ENCODE measurements at regions of chr17 and their contacts with region 1.

Region 1: DNA sequence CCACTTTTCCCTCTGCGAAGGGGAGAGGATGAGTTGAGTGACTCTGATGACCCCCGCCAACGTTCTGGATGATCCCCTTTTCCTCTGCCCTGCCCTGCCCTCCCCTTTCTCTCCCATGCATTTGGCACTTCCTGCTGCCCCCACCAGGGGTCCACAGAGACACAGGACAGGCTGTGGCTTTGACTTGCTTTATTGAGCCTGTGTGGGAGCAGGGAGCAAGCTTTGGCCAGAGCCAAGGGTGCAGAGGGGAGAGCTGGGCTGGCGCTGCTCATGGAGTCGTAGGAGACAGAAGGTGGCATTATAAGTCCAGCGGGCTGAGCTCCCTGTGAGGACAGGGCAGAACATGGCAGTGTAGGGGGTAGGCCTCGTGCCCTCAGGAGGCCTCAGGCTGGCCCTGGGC is 1.6 kb downstream of the PPY start:
- DNase-seq: no peak
- CTCF ChIP-seq: no peak

Region 2: GRCh38 chr17:43994272-43995149 is 53.9 kb after region 1 on chr17:
- in situ Hi-C with region 1: loop called (anchors 10 kb)
- DNase-seq: peak; percentile 82
- CTCF ChIP-seq: peak; percentile 72

Region 3: DNA sequence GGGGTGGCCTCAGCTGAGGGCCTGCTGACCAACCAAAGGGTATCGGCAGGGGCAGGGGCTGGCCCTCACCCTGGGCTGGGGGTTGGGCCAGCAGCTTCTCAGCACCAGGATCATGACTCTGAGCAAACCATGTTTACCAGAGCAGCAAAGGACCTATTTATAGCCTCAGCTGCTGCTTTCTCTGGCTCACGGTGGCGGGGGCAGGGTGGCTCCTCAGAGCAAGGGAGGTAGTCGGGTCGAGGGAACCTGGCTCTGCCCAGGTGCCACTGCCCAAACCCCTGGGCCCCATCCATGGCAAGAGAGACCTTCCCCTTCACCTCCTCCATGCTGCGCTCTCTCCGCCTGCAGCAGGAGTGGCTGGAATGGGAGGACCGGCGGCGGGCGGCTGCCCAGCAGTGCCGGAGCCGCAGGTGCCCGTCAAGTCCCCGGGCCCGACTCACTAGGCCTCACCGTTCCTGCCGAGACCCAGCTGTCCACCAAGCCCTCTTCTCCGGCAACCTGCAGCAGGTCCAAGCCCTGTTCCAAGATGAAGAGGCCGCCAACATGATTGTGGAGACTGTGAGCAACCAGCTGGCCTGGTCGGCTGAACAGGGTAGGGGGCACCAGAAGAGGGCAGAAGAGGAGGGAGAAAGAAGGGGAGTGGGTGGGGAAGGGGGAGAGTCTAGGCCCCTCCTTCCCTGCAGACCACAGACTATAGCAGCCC is 230.0 kb after region 1 on chr17 and contains the start of gene ASB16:
- in situ Hi-C with region 1: loop called (anchors 25 kb)
- DNase-seq: no peak
- CTCF ChIP-seq: no peak

Measured in GM13976 (cell line).